ENCODE measurements at regions of chr6 and their contacts with region 1.

Region 1: DNA sequence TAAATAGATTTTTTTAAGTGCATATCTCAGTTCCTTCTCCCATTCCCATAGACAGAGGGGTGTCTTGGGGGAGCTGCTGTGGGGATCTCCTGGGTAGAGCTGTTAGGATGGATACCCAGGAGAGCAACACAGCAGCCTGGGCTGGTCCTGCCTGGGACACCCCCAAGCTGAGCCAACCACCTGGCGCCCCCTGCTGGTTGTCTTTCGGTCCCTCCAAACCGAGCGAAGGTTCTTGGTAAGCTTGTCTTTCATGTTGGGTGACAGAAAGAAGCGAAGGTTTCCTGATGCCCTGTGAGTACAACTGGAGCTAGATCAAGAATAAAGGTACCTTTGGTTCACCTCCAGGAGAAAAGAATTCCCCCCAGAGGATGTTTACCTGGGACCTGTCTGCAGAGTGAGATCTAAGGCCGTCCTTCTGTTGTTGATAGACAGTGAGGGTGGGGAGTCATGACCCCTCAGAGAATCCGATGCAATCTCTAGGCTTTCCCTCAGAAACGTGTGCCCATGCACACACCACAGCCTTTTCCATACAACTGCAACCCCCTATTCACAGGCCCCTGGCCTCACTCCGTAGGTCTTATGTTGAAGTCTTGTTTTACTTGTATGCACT is 50.8 kb downstream of the SNX9 start:
- DNase-seq: peak; percentile 52 to 86 (median 80)
- ATAC-seq: peak; percentile 73 to 89 (median 76)
- H3K4me3 ChIP-seq: no peak overlapping the region
- H3K4me3 Mint-ChIP-seq: no peak overlapping the region
- H3K27ac ChIP-seq: no peak overlapping the region
- H3K27ac Mint-ChIP-seq: peak overlapping the region in 1 of 2 donors; percentile 29
- H3K4me1 ChIP-seq: peaks cover 12 to 16% of the 10 kb centered on the region in 2 experiments
- H3K4me1 Mint-ChIP-seq: peaks cover 36 to 42% (median 37%) of the 10 kb centered on the region in 3 donors
- H3K27me3 ChIP-seq: no peaks in the 10 kb centered on the region
- H3K27me3 Mint-ChIP-seq: no peaks in the 10 kb centered on the region

Region 2: DNA sequence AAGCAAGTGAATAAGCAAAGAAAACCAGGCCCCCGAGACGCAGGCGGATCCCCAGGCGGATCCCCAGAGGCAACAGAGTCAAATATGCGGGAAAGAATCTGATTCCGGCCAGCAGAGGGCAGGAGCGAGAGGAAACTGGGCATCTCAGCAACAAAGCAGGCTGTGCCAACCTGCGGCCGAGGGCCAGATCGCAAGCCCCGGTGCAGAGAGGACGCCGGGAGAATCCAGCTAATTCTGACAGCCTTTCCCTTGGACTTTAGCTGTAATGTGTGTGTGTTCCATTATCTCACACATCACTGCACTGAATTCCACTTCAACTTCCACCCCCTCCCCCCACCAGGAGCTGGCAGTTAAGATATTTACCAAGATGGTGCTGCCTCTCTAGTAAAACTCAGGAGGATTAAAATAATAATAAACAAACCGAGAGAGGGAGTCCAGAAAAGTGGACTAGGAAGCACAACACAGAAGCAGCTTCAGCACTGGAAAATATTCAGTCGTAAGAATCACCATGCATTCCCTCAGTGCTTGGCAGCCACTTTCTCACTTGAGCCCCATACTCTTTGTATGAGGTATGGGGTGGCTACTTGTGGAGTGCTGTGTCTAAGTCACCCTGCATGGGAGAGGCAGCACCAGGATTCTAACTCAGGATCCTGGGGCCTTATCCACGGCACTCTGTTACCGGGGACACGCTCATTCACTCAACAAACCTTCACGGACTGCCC is 117.0 kb before region 1 on chr6:
- CTCF ChIA-PET with region 1: interaction called, 6 to 49 read pairs
- POLR2A ChIA-PET with region 1: interaction called in 1 of 2 experiments, 3 read pairs
- DNase-seq: peak; percentile 38 to 88 (median 74)
- ATAC-seq: peak; percentile 30 to 52 (median 44)
- H3K4me3 ChIP-seq: peak overlapping the region in 1 of 2 donors; percentile 2
- H3K4me3 Mint-ChIP-seq: peak overlapping the region in 2 of 3 donors; percentile 17 to 77
- H3K27ac ChIP-seq: no peak overlapping the region
- H3K27ac Mint-ChIP-seq: peak overlapping the region; percentile 69 to 84
- H3K4me1 ChIP-seq: peaks cover 22 to 51% of the 10 kb centered on the region in 2 experiments
- H3K4me1 Mint-ChIP-seq: peaks cover 74 to 78% (median 77%) of the 10 kb centered on the region in 3 donors
- H3K27me3 ChIP-seq: peaks cover 0 to 9% of the 10 kb centered on the region in 2 experiments
- H3K27me3 Mint-ChIP-seq: peaks cover 0 to 5% of the 10 kb centered on the region in 2 donors

Region 3: GRCh38 chr6:157823528-157824370 is 50.1 kb before region 1 on chr6:
- CTCF ChIA-PET with region 1: interaction called in 1 of 2 experiments, 5 read pairs
- POLR2A ChIA-PET with region 1: interaction called, 9 to 10 read pairs
- DNase-seq: peak in 34 of 35 experiments; percentile 39 to 91 (median 78)
- ATAC-seq: peak; percentile 48 to 79 (median 53)
- H3K4me3 ChIP-seq: peak overlapping the region; percentile 69 to 77
- H3K4me3 Mint-ChIP-seq: peak overlapping the region; percentile 93 to 97 (median 94)
- H3K27ac ChIP-seq: peak overlapping the region; percentile 75
- H3K27ac Mint-ChIP-seq: peak overlapping the region; percentile 97
- H3K4me1 ChIP-seq: peaks cover 9 to 17% of the 10 kb centered on the region in 2 experiments
- H3K4me1 Mint-ChIP-seq: peaks cover 36 to 43% (median 39%) of the 10 kb centered on the region in 3 donors
- H3K27me3 ChIP-seq: no peaks in the 10 kb centered on the region
- H3K27me3 Mint-ChIP-seq: no peaks in the 10 kb centered on the region

Region 4: GRCh38 chr6:157885211-157885788 is 11.5 kb after region 1 on chr6:
- CTCF ChIA-PET with region 1: interaction called, 4 to 17 read pairs
- POLR2A ChIA-PET with region 1: interaction called, 4 to 10 read pairs
- DNase-seq: peak in 33 of 35 experiments; percentile 21 to 89 (median 70)
- ATAC-seq: peak; percentile 83 to 87 (median 85)
- H3K4me3 ChIP-seq: no peak overlapping the region
- H3K4me3 Mint-ChIP-seq: peak overlapping the region in 2 of 3 donors; percentile 47 to 48
- H3K27ac ChIP-seq: peak overlapping the region; percentile 95
- H3K27ac Mint-ChIP-seq: peak overlapping the region; percentile 91
- H3K4me1 ChIP-seq: peaks cover 14 to 15% of the 10 kb centered on the region in 2 experiments
- H3K4me1 Mint-ChIP-seq: peaks cover 56 to 72% (median 63%) of the 10 kb centered on the region in 3 donors
- H3K27me3 ChIP-seq: no peaks in the 10 kb centered on the region
- H3K27me3 Mint-ChIP-seq: no peaks in the 10 kb centered on the region

Region 5: GRCh38 chr6:157893238-157893637 is 19.4 kb after region 1 on chr6:
- CTCF ChIA-PET with region 1: interaction called, 3 to 12 read pairs
- POLR2A ChIA-PET with region 1: interaction called in 1 of 2 experiments, 6 read pairs
- DNase-seq: peak in 33 of 35 experiments; percentile 25 to 78 (median 58)
- ATAC-seq: peak; percentile 54 to 81 (median 78)
- H3K4me3 ChIP-seq: no peak overlapping the region
- H3K4me3 Mint-ChIP-seq: peak overlapping the region in 1 of 3 donors; percentile 61
- H3K27ac ChIP-seq: peak overlapping the region; percentile 32
- H3K27ac Mint-ChIP-seq: peak overlapping the region; percentile 37 to 64
- H3K4me1 ChIP-seq: peaks cover 17 to 24% of the 10 kb centered on the region in 2 experiments
- H3K4me1 Mint-ChIP-seq: peaks cover 40% of the 10 kb centered on the region in 3 donors
- H3K27me3 ChIP-seq: no peaks in the 10 kb centered on the region
- H3K27me3 Mint-ChIP-seq: no peaks in the 10 kb centered on the region

Measured in T-cell (primary cell).